Cardiac septum (tissue), 1 donor: ENCODE measurements at regions of chr21 and their contacts with region 1.

Region 1: DNA sequence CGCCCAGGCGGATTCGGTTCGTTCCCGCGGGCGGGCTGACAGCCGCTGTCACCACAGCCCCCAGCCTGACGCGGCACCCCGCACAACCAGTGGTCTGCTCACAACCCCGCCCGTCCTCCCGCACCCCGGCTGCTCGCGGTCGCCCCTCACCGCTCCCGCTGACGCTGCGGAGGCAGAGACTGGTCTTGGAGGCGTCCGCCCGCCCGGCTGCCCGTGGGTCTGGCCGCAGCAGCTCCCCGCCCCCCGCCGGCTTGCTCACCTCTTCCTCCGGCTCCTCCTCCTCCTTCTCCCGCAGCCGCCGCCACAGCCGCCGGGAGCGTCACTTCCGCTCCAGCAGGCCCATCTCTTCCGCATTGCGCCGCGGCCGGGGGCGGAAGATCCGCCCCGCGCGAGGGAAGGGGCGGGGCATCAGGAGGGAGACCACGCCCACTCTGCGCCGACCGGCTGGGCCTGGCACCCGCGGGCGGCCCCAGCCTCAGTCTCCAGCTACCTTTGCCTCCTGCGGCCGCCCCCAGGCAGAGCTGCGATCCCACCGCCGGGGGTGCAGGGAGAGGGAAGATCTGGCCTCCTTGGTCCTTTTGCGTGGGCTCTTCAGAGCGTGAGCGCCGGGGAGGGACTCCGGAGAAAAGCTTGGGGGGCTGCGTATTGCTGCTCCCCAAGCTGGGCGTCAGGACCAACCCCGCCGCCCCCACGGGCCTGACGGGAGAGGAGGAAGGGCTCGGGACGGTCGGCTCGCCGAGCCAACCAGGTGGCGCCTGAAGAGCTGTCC is at the start of gene SYNJ1:
- DNase-seq: peak; percentile 98
- total RNA-seq, gene SYNJ1: 10.8 TPM

Region 2: GRCh38 chr21:32612075-32612998 is 115.5 kb before region 1 on chr21 and contains the start of gene CFAP298:
- intact Hi-C with region 1: loop called (anchors 2 kb)
- DNase-seq: peak; percentile 93
- total RNA-seq, gene CFAP298: 22.0 TPM

Region 3: GRCh38 chr21:32770871-32771523 is 43.1 kb after region 1 on chr21:
- intact Hi-C with region 1: loop called (anchors 2 kb)
- DNase-seq: peak; percentile 77

Region 4: DNA sequence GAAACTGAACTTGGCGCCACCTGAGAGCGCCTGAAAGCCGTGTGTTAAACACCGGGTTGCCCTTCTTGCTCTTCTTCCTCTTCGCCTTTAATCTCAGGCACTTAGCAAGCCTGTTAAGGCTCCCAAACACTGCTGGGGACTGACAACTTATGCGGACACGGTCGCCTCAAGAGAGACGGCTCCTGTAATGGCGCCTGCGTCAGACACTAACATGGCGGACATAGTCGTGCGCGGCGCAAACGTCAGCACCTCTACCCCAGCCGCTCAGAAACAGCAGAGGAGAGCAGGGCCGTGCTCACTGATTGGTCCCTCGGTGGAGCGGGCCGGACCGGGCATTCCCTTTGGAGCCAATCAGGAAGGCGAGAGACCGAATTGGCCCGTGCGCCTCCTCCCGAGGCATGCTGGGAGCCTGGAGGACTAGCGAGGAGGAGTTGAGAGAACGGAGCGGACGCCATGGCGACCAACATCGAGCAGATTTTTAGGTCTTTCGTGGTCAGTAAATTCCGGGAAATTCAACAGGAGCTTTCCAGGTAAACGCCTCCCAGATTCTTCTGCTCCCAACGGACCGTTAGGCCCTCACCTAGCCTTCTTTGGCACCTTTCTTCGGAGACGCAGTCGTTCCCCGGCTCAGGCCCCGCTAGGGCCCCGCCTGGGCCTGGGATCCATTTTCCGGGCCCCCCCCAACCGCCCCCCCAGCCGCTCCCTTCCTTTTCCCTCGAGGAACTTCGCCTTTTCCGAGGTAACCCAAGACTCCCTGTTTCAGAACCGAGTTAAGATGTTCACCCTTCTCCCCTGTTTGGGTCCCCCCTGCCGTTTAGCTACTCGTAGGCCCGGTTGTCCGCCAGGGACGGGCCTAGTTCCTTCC is 815.0 kb after region 1 on chr21 and contains the start of gene SON:
- intact Hi-C with region 1: loop called (anchors 1 kb)
- DNase-seq: peak; percentile 100
- total RNA-seq, gene SON: 212 TPM